KBM-7 (cell line): ENCODE measurements at regions of chrX and their contacts with region 1.

Region 1: GRCh38 chrX:9464435-9465371 is at the start of gene TBL1X:
- DNase-seq: peak; percentile 50

Region 2: GRCh38 chrX:9062641-9063040 is 402.1 kb before region 1 on chrX:
- in situ Hi-C with region 1: no loop called
- DNase-seq: no peak

Region 3: GRCh38 chrX:9352694-9353411 is 111.8 kb before region 1 on chrX:
- in situ Hi-C with region 1: loop called (anchors 10 kb)
- DNase-seq: peak; percentile 93